Activated CD4-positive, alpha-beta memory T cell treated with anti-CD3 and anti-CD28 coated beads for 36 hours (primary cell): ENCODE measurements at regions of chr1 and their contacts with region 1.

Region 1: GRCh38 chr1:67332653-67333529 is 25.2 kb downstream of the IL12RB2 start:
- DNase-seq: no peak
- H3K4me3 Mint-ChIP-seq: peak overlapping the region; percentile 9
- H3K27ac Mint-ChIP-seq: peak overlapping the region; percentile 82
- H3K4me1 Mint-ChIP-seq: peaks cover 80% of the 10 kb centered on the region
- H3K27me3 Mint-ChIP-seq: no peaks in the 10 kb centered on the region

Region 2: GRCh38 chr1:66446261-66447001 is 886.5 kb before region 1 on chr1:
- CTCF ChIA-PET with region 1: no interaction called
- POLR2A ChIA-PET with region 1: no interaction called
- intact Hi-C with region 1: no loop called
- DNase-seq: peak; percentile 23
- H3K4me3 Mint-ChIP-seq: peak overlapping the region; percentile 6
- H3K27ac Mint-ChIP-seq: peak overlapping the region; percentile 86
- H3K4me1 Mint-ChIP-seq: peaks cover 21% of the 10 kb centered on the region
- H3K27me3 Mint-ChIP-seq: peaks cover 4% of the 10 kb centered on the region

Region 3: GRCh38 chr1:66981679-66982078 is 351.2 kb before region 1 on chr1:
- CTCF ChIA-PET with region 1: no interaction called
- POLR2A ChIA-PET with region 1: no interaction called
- intact Hi-C with region 1: loop called (anchors 5 kb)
- DNase-seq: peak; percentile 47
- H3K4me3 Mint-ChIP-seq: peak overlapping the region; percentile 53
- H3K27ac Mint-ChIP-seq: peak overlapping the region; percentile 72
- H3K4me1 Mint-ChIP-seq: peaks cover 42% of the 10 kb centered on the region
- H3K27me3 Mint-ChIP-seq: no peaks in the 10 kb centered on the region

Region 4: DNA sequence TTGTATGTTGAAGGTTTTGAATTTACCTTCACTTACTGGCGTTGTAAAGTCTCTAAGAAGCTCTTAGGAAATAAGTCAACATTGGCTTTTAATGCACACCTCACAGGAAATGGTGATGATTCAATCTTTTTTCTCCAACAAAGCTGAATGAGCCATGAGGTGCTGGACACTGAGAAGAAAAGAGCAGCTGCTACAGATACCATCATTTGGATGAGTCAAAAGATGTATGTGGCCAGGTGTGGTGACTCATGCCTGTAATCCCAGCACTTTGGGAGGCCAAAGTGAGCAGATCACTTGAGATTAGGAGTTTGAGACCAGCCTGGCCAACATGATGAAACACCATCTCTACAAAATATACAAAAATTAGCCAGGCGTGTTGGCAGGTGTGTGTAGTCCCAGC is 169.9 kb before region 1 on chr1:
- CTCF ChIA-PET with region 1: interaction called, 4 read pairs
- POLR2A ChIA-PET with region 1: interaction called, 4 read pairs
- intact Hi-C with region 1: loop called (anchors 1 kb)
- DNase-seq: peak; percentile 78
- H3K4me3 Mint-ChIP-seq: peak overlapping the region; percentile 30
- H3K27ac Mint-ChIP-seq: peak overlapping the region; percentile 73
- H3K4me1 Mint-ChIP-seq: peaks cover 56% of the 10 kb centered on the region
- H3K27me3 Mint-ChIP-seq: peaks cover 5% of the 10 kb centered on the region

Region 5: GRCh38 chr1:67194209-67194863 is 138.6 kb before region 1 on chr1:
- CTCF ChIA-PET with region 1: no interaction called
- POLR2A ChIA-PET with region 1: interaction called, 5 read pairs
- intact Hi-C with region 1: loop called (anchors 1 kb)
- DNase-seq: no peak
- H3K4me3 Mint-ChIP-seq: no peak overlapping the region
- H3K27ac Mint-ChIP-seq: peak overlapping the region; percentile 79
- H3K4me1 Mint-ChIP-seq: peaks cover 28% of the 10 kb centered on the region
- H3K27me3 Mint-ChIP-seq: peaks cover 5% of the 10 kb centered on the region

Region 6: DNA sequence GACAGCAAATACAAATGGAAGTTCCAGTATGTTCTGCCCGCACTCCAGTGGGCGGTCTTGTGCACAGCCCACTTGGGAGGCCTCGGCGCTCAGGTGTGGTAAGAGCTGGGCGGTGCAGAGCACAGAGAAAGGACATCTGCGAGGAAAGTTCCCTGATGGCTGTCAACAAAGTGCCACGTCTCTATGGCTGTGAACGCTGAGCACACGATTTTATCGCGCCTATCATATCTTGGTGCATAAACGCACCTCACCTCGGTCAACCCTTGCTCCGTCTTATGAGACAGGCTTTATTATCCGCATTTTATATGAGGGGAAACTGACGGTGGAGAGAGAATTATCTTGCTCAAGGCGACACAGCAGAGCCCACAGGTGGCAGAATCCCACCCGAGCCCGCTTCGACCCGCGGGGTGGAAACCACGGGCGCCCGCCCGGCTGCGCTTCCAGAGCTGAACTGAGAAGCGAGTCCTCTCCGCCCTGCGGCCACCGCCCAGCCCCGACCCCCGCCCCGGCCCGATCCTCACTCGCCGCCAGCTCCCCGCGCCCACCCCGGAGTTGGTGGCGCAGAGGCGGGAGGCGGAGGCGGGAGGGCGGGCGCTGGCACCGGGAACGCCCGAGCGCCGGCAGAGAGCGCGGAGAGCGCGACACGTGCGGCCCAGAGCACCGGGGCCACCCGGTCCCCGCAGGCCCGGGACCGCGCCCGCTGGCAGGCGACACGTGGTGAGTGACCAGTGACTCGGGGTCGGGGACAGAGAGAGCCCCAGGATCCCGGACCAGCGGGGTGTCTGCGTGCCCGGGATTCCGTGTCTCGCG is 25.4 kb before region 1 on chr1 and contains the start of gene IL12RB2:
- CTCF ChIA-PET with region 1: interaction called, 8 read pairs
- POLR2A ChIA-PET with region 1: interaction called, 21 read pairs
- intact Hi-C with region 1: loop called (anchors 1 kb)
- DNase-seq: peak; percentile 75
- H3K4me3 Mint-ChIP-seq: peak within 1 kb of the TSS; percentile 95
- H3K27ac Mint-ChIP-seq: peak within 1 kb of the TSS; percentile 96
- H3K4me1 Mint-ChIP-seq: peaks cover 52% of the 10 kb centered on the region
- H3K27me3 Mint-ChIP-seq: peaks cover 2% of the 10 kb centered on the region
- total RNA-seq, gene IL12RB2: 86.9 to 90.7 TPM

Region 7: GRCh38 chr1:67350783-67351182 is 17.9 kb after region 1 on chr1:
- CTCF ChIA-PET with region 1: interaction called, 7 read pairs
- POLR2A ChIA-PET with region 1: interaction called, 14 read pairs
- intact Hi-C with region 1: loop called (anchors 1 kb)
- DNase-seq: peak; percentile 82
- H3K4me3 Mint-ChIP-seq: no peak overlapping the region
- H3K27ac Mint-ChIP-seq: peak overlapping the region; percentile 59
- H3K4me1 Mint-ChIP-seq: peaks cover 41% of the 10 kb centered on the region
- H3K27me3 Mint-ChIP-seq: no peaks in the 10 kb centered on the region

Region 8: DNA sequence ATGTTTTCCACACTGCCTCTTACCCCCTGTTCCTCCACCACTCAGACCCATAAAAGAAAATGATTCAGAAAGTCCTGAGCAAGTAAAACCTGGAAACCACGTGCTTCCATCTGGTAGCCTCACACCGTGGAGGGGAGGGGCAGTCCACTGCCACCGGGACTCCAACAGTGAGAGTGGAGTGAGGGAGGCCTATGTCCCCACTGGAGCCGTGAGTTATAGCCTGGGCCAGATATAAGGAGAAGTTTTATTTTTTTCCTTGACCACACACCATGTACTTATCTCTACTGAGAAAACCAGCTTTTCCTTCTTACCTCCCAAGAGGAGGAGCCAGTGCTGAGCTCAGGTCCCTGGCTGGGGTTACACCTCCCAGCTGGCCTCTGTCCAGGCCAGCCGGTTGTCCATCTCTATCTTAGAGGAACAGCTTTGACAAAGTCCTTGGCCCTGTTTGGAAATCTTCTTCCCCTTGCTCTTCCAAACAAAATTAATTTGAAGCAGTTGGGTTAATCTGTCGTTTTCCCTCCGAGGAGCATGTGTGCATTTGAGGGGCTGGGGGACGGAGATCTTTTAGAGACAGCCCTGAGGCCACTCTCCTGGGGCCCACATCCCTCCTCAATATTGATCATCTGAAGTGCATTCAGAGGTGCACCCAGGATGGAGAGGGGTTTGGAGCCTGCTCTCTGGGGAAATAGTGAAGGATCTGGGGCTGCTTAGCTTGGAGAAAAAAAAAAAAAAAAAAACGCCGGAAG is 146.4 kb after region 1 on chr1:
- CTCF ChIA-PET with region 1: no interaction called
- POLR2A ChIA-PET with region 1: no interaction called
- intact Hi-C with region 1: no loop called
- DNase-seq: peak; percentile 48
- H3K4me3 Mint-ChIP-seq: no peak overlapping the region
- H3K27ac Mint-ChIP-seq: no peak overlapping the region
- H3K4me1 Mint-ChIP-seq: peaks cover 9% of the 10 kb centered on the region
- H3K27me3 Mint-ChIP-seq: no peaks in the 10 kb centered on the region

Region 9: DNA sequence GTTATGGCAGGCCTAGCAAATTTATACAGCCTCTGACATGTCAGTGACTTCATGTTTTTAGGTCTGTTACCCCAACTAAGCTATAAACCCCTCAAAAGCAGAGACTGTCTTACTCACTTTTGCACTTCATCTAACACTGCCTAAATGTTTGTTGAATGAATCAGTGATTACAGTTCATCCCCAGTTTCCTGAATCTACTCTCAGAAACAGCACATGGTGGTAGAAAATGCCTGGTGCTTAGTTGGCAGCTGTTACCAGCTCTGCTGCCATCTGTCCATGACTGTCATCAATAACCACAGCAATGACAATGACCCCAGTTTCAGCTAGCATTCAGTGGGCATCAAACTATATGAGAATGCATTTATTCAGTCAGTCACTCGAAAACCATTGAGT is 207.8 kb after region 1 on chr1:
- CTCF ChIA-PET with region 1: no interaction called
- POLR2A ChIA-PET with region 1: no interaction called
- intact Hi-C with region 1: no loop called
- DNase-seq: no peak
- H3K4me3 Mint-ChIP-seq: no peak overlapping the region
- H3K27ac Mint-ChIP-seq: no peak overlapping the region
- H3K4me1 Mint-ChIP-seq: no peaks in the 10 kb centered on the region
- H3K27me3 Mint-ChIP-seq: no peaks in the 10 kb centered on the region